Activated naive CD4-positive, alpha-beta T cell treated with anti-CD3 and anti-CD28 coated beads for 36 hours (primary cell): ENCODE measurements at regions of chr6 and their contacts with region 1.

Region 1: GRCh38 chr6:156191895-156192294 is 585.3 kb upstream of the ARID1B start:
- DNase-seq: no peak
- H3K4me3 Mint-ChIP-seq: peak overlapping the region; percentile 27
- H3K27ac Mint-ChIP-seq: peak overlapping the region; percentile 61
- H3K4me1 Mint-ChIP-seq: peaks cover 40% of the 10 kb centered on the region
- H3K27me3 Mint-ChIP-seq: no peaks in the 10 kb centered on the region

Region 2: GRCh38 chr6:156167625-156168071 is 24.2 kb before region 1 on chr6:
- CTCF ChIA-PET with region 1: interaction called, 4 read pairs
- intact Hi-C with region 1: loop called (anchors 1 kb)
- DNase-seq: peak; percentile 10
- H3K4me3 Mint-ChIP-seq: peak overlapping the region; percentile 63
- H3K27ac Mint-ChIP-seq: no peak overlapping the region
- H3K4me1 Mint-ChIP-seq: peaks cover 39% of the 10 kb centered on the region
- H3K27me3 Mint-ChIP-seq: no peaks in the 10 kb centered on the region

Region 3: GRCh38 chr6:156174031-156174890 is 17.6 kb before region 1 on chr6:
- CTCF ChIA-PET with region 1: interaction called, 4 read pairs
- intact Hi-C with region 1: loop called (anchors 1 kb)
- DNase-seq: peak; percentile 72
- H3K4me3 Mint-ChIP-seq: no peak overlapping the region
- H3K27ac Mint-ChIP-seq: peak overlapping the region; percentile 25
- H3K4me1 Mint-ChIP-seq: peaks cover 18% of the 10 kb centered on the region
- H3K27me3 Mint-ChIP-seq: no peaks in the 10 kb centered on the region

Region 4: DNA sequence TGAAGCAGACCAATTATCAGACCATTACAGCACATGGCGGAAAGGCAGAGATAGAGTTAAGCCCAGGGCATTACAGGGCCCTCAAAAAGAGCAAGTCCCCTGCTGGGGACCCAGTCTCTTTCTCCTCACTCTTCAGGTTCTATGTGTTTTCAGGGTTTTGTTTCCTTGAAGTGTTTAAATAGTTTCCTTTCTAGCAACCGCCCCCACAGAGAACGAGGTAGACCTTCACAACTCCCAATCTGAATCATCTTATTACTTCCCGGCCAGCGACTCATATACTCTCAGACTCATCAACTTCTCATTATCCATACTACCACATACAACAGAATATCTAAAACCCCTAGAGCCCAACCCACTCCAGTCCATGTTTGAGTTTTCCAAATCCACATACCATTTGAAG is 58.7 kb after region 1 on chr6:
- CTCF ChIA-PET with region 1: no interaction called
- intact Hi-C with region 1: loop called (anchors 1 kb)
- DNase-seq: peak; percentile 72
- H3K4me3 Mint-ChIP-seq: no peak overlapping the region
- H3K27ac Mint-ChIP-seq: peak overlapping the region; percentile 74
- H3K4me1 Mint-ChIP-seq: peaks cover 29% of the 10 kb centered on the region
- H3K27me3 Mint-ChIP-seq: no peaks in the 10 kb centered on the region

Region 5: GRCh38 chr6:156280065-156280464 is 88.2 kb after region 1 on chr6:
- CTCF ChIA-PET with region 1: no interaction called
- intact Hi-C with region 1: no loop called
- DNase-seq: no peak
- H3K4me3 Mint-ChIP-seq: no peak overlapping the region
- H3K27ac Mint-ChIP-seq: no peak overlapping the region
- H3K4me1 Mint-ChIP-seq: peaks cover 6% of the 10 kb centered on the region
- H3K27me3 Mint-ChIP-seq: peaks cover 1% of the 10 kb centered on the region

Region 6: GRCh38 chr6:157054531-157054979 is 862.7 kb after region 1 on chr6:
- CTCF ChIA-PET with region 1: no interaction called
- intact Hi-C with region 1: loop called (anchors 10 kb)
- DNase-seq: peak; percentile 67
- H3K4me3 Mint-ChIP-seq: peak overlapping the region; percentile 29
- H3K27ac Mint-ChIP-seq: peak overlapping the region; percentile 94
- H3K4me1 Mint-ChIP-seq: peaks cover 43% of the 10 kb centered on the region
- H3K27me3 Mint-ChIP-seq: no peaks in the 10 kb centered on the region